Right cardiac atrium (tissue), 5 donors: ENCODE measurements at regions of chr9 and their contacts with region 1.

Region 1: DNA sequence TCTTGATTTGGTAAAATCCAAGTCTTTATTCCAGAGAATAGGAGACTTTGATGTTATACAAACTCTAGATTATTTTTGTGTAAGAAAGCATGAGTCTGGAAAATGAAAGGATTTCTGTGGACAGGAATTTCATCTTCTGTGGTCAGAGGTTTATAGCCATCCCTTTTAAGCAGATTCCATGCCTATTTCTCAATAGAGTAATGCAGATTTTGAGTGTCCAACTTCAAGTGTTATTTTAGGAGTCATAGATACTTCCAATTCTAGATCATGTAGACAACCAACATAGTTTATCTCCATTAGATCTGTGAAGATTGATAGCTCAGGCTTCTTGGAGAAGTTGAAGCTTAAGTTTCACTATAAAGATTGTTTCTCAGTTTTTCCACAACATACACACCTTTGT is 379.7 kb downstream of the PSAT1 start:
- DNase-seq: no peak
- ATAC-seq: no peak
- H3K4me3 ChIP-seq: no peak overlapping the region
- H3K27ac ChIP-seq: no peak overlapping the region
- H3K4me1 ChIP-seq: no peaks in the 10 kb centered on the region
- H3K27me3 ChIP-seq: no peaks in the 10 kb centered on the region

Region 2: GRCh38 chr9:78691542-78691941 is 14.9 kb after region 1 on chr9:
- intact Hi-C with region 1: no loop called
- DNase-seq: no peak
- ATAC-seq: no peak
- H3K4me3 ChIP-seq: no peak overlapping the region
- H3K27ac ChIP-seq: no peak overlapping the region
- H3K4me1 ChIP-seq: no peaks in the 10 kb centered on the region
- H3K27me3 ChIP-seq: no peaks in the 10 kb centered on the region

Region 3: DNA sequence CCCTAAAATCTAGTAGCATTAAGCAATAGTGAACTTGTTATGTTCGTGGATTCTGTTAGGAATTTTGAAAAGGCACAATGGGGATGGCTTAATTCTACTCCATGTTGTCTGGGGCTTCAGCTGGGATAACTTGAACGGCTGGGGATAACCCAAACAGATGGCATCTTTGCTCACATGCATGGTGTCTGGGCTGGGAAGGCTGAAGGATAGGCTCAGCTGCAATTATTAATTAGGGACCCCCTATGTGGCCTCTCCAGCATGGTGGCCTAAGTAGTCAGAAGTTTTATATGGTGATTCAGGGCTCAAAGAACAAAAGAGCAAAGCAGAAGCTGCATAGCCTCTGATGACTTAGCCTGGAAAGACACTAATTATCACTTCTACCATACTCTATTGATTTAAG is 171.4 kb after region 1 on chr9:
- intact Hi-C with region 1: loop called in 1 of 4 experiments (anchors 5 kb)
- DNase-seq: no peak
- ATAC-seq: no peak
- H3K4me3 ChIP-seq: no peak overlapping the region
- H3K27ac ChIP-seq: no peak overlapping the region
- H3K4me1 ChIP-seq: no peaks in the 10 kb centered on the region
- H3K27me3 ChIP-seq: no peaks in the 10 kb centered on the region